ENCODE measurements at regions of chr17 and their contacts with region 1.

Region 1: DNA sequence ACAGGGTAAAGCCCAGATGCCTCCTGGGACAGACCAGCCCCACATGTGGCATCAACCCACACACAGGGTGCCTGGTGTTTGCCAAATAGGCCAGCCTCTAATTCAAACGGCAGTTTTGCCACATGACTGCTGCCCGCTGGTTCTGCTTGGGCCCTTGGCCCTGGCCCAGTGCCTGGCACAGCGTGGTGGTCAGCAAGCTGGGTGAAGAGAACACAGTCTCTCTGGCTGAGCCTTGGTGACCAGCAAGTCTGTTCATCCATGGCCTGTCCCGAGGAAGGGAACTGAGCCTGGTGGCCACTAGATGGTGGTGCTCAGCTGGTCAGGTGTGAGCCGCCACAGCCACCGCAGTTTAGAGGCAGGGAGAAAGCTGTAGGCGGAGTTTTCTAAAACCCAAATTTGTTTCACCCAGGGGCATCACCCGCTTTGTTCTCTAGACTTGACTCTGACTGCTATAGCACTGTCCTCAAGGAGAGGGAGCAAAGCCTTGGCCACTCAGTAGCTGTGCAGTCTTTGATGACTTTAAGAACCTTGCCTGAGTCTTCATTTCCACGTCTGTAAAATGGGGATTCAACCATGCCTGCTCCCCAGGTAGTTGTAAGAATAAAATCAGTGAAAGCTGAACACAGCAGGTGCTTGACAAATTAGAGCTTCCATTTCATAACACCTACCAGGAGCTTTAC is 4.7 kb upstream of the GFAP start:
- DNase-seq: peak; percentile 55
- H3K4me3 ChIP-seq: no peak overlapping the region
- H3K27ac ChIP-seq: no peak overlapping the region
- H3K27me3 ChIP-seq: no peaks in the 10 kb centered on the region
- CTCF ChIP-seq: peak; percentile 87

Region 2: GRCh38 chr17:44733753-44734152 is 186.3 kb before region 1 on chr17:
- CTCF ChIA-PET with region 1: no interaction called
- POLR2A ChIA-PET with region 1: no interaction called
- DNase-seq: no peak
- H3K4me3 ChIP-seq: no peak overlapping the region
- H3K27ac ChIP-seq: no peak overlapping the region
- H3K27me3 ChIP-seq: no peaks in the 10 kb centered on the region
- CTCF ChIP-seq: peak; percentile 24; the same call in 1 of the 2 replicates

Region 3: DNA sequence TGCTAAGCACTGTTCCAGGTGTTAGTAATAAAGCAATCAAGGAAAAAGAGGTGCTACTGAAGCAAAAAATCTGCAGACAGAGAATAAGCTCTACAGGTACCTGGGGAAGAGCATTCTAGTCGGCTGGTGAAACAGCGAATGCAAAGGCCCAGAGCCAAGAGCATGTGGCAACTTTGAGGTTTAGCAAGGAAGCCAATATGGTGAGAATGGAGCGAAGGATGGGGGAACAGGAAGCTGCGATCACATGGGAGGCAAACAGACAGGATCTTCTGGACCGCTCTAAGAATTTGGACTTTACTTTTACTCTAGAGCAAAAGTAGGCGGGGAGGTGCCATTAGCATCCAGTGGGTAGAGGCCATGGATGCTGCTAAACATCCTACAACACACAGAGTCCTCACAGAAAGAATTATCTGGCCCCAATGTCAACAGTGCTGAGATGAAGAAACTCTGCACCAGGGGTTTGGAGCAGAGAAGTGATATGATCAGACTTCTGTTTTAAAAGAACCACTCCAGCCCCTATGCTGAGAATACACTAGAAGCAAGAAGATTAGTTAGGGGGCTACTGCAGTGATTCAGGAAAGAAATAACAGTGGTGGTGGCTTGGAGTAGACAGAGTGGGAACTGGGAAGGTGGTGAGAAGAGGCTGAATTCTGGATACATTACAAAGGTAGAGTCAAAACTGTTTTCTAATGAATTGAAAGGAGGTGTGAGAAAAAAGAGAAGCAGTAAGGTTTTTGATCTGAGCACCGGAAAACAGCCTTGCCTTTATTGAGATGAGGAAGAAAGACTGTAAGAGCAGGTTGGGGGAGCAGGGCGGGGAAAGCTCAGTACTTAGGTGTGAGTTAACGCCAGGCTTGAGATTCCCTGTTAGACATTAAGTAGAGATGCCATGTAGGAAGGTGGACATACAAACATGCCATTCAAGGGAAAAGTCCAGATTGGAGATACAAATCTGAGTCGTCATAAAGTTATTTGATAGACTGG is 31.8 kb before region 1 on chr17:
- CTCF ChIA-PET with region 1: interaction called, 10 read pairs
- POLR2A ChIA-PET with region 1: no interaction called
- DNase-seq: no peak
- H3K4me3 ChIP-seq: no peak overlapping the region
- H3K27ac ChIP-seq: no peak overlapping the region
- H3K27me3 ChIP-seq: no peaks in the 10 kb centered on the region
- CTCF ChIP-seq: no peak

Region 4: DNA sequence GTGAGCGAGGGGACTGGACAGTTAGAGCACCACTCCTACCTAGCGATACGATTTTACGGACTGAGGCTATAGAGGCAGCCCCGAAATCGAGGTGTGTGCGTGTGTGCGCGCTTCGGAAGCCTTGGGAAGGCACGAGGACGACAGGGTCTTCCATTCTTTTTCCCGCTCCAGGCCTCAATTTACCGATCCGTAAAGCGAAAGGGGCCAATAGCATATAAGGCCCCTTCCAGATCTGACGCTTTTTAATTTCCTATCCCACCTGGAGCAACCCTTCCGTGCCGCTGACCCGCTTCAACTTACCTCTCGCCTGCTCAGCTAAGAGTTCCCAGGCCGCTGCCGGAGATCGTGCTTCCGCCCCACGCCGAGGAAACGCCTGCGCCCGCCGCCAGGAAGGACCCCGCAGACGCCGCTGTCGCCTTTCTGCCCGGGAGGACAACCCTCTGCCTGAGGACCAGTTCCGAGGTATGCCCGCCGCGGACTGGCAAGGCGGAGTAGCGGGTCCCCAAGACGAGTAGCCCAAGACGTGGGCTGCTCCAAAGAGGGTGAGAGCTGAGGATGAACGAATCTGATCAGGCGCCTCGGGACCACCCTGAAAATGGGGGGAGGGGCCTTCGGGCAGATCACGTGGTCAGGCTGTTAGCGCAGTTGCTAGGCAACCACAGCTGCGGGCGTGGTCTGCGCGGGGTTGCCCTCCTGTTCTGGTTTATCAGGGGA is 20.8 kb before region 1 on chr17 and contains the start of gene EFTUD2:
- CTCF ChIA-PET with region 1: interaction called, 19 read pairs
- POLR2A ChIA-PET with region 1: no interaction called
- DNase-seq: peak; percentile 74
- H3K4me3 ChIP-seq: peak within 1 kb of the TSS; percentile 98
- H3K27ac ChIP-seq: peak within 1 kb of the TSS; percentile 94
- H3K27me3 ChIP-seq: no peaks in the 10 kb centered on the region
- CTCF ChIP-seq: no peak
- polyA plus RNA-seq, gene EFTUD2: 123 and 147 TPM in 2 replicates

Region 5: GRCh38 chr17:44932496-44933097 is 12.6 kb after region 1 on chr17:
- CTCF ChIA-PET with region 1: interaction called, 13 read pairs
- POLR2A ChIA-PET with region 1: interaction called, 3 read pairs
- DNase-seq: no peak
- H3K4me3 ChIP-seq: no peak overlapping the region
- H3K27ac ChIP-seq: no peak overlapping the region
- H3K27me3 ChIP-seq: no peaks in the 10 kb centered on the region
- CTCF ChIP-seq: no peak

Region 6: GRCh38 chr17:45013021-45013997 is 93.3 kb after region 1 on chr17:
- CTCF ChIA-PET with region 1: interaction called, 244 read pairs
- POLR2A ChIA-PET with region 1: no interaction called
- DNase-seq: no peak
- H3K4me3 ChIP-seq: no peak overlapping the region
- H3K27ac ChIP-seq: no peak overlapping the region
- H3K27me3 ChIP-seq: no peaks in the 10 kb centered on the region
- CTCF ChIP-seq: no peak

Region 7: GRCh38 chr17:45051060-45051719 is 131.2 kb after region 1 on chr17 and contains the start of gene DCAKD:
- CTCF ChIA-PET with region 1: interaction called, 12 read pairs
- POLR2A ChIA-PET with region 1: no interaction called
- DNase-seq: peak; percentile 86
- H3K4me3 ChIP-seq: peak within 1 kb of the TSS; percentile 71
- H3K27ac ChIP-seq: peak within 1 kb of the TSS; percentile 94
- H3K27me3 ChIP-seq: no peaks in the 10 kb centered on the region
- CTCF ChIP-seq: no peak
- polyA plus RNA-seq, gene DCAKD: 21.8 and 29.1 TPM in 2 replicates

Region 8: GRCh38 chr17:45098869-45099616 is 179.0 kb after region 1 on chr17:
- CTCF ChIA-PET with region 1: interaction called, 12 read pairs
- POLR2A ChIA-PET with region 1: no interaction called
- DNase-seq: peak; percentile 44
- H3K4me3 ChIP-seq: no peak overlapping the region
- H3K27ac ChIP-seq: peak overlapping the region; percentile 39
- H3K27me3 ChIP-seq: no peaks in the 10 kb centered on the region
- CTCF ChIP-seq: peak; percentile 83